ENCODE measurements at regions of chr19 and their contacts with region 1.

Region 1: GRCh38 chr19:10695401-10696398 is 5.5 kb upstream of the QTRT1 start:
- DNase-seq: peak; percentile 78 to 92
- ATAC-seq: peak; percentile 92
- H3K4me3 ChIP-seq: peak overlapping the region; percentile 18; the same call in 1 of the 3 replicates
- H3K27ac ChIP-seq: no peak overlapping the region
- H3K4me1 ChIP-seq: peaks cover 9% of the 10 kb centered on the region; the same call in 1 of the 3 replicates
- CTCF ChIP-seq: no peak
- EP300 ChIP-seq: no peak
- POLR2A ChIP-seq: no peak
- RAD21 ChIP-seq: no peak

Region 2: DNA sequence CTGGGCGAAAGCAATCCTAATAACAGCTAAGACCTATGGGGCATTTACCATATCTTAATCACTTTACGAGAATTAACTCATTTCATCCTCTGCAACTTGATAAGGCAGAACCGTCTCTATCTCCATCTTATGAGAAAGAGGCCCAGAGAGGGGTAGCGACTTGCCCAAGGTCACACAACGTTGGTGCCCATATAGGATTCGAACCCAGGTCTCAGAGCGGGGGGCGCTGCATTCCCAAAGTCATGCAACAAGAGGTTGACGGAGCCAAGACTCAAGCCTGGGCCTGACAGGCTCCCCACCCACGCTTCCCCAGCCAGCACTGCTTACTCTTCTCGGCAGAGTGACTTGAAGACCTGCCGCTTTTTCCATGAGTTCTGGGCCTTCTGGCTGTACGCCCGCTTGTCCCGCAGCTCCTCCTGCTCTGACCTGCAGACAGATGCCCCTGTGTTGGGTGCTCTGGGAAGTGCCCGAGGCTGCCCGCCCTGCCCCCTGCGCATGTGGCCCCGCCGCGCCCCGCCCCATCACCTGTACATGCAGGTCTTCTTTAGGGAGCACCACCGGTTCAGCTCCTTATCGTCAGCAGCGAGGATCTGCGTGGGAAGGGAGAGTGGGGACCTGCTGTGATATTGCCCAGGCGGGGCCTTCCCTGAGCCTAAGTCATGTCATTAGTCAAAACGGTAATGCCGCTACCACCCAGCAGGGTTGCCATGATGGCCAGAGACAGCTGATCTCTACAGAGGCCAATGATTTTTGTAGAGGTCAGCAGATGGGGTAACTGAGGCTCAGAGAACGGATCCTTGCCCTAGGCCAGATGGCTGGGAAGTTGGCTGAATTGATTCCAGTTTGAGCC is 140.7 kb before region 1 on chr19:
- CTCF ChIA-PET with region 1: no interaction called
- POLR2A ChIA-PET with region 1: no interaction called
- DNase-seq: no peak
- ATAC-seq: 0 out of 6 replicates have a peak, but pooled peaks of 1 of the 2 experiments have one; percentile 35
- H3K4me3 ChIP-seq: no peak overlapping the region
- H3K27ac ChIP-seq: no peak overlapping the region
- H3K4me1 ChIP-seq: no peaks in the 10 kb centered on the region
- CTCF ChIP-seq: no peak
- EP300 ChIP-seq: no peak
- POLR2A ChIP-seq: no peak
- RAD21 ChIP-seq: no peak

Region 3: GRCh38 chr19:10615429-10616023 is 80.2 kb before region 1 on chr19:
- CTCF ChIA-PET with region 1: no interaction called
- POLR2A ChIA-PET with region 1: no interaction called
- DNase-seq: no peak
- ATAC-seq: no peak
- H3K4me3 ChIP-seq: no peak overlapping the region
- H3K27ac ChIP-seq: no peak overlapping the region
- H3K4me1 ChIP-seq: no peaks in the 10 kb centered on the region
- CTCF ChIP-seq: no peak
- EP300 ChIP-seq: no peak
- POLR2A ChIP-seq: no peak
- RAD21 ChIP-seq: no peak

Region 4: DNA sequence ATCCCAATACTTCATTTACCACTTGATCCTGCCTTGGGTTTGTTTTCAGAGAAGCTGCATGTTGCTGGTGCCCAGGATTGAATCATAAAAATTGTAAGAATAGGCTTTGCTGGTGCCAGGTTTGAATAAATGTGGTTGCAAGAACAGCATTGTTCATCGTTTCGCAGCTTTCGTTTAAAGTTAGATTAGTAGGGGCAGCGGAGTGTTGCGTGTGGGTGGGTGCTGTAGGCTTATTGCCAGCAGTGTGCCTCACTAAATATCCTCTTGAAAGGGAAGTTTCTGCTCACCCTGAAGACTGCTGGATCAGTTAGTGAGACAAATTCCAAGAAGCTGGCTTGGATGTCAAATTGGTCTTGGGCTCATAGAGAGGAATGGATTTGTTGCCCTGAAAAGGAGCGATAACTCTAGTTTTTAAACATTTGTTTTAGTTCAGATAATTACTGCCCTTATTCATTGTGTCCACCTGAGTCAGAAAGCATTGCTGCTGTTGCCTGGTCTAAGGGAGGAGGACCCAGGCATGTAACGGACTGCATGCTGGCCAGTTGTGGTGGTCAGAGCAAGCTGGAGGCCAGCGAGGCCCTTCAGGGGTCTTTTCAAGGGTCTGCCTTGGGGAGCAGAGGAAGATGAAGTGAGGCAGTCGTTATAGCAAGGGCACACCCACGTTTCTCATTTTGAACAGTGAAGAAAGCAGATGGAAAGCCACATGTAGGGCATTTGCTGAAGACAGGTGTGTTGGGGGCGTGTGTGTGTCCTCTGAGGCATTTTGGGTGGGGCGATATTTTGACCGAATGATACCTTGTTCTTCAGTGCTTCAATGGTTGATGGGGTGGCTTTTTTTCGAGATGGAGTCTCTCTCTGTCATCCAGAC is 33.1 kb before region 1 on chr19:
- CTCF ChIA-PET with region 1: interaction called, 13 read pairs
- POLR2A ChIA-PET with region 1: no interaction called
- DNase-seq: no peak
- ATAC-seq: no peak
- H3K4me3 ChIP-seq: no peak overlapping the region
- H3K27ac ChIP-seq: no peak overlapping the region
- H3K4me1 ChIP-seq: peaks cover 10% of the 10 kb centered on the region; the same call in 2 of the 3 replicates
- CTCF ChIP-seq: no peak
- EP300 ChIP-seq: no peak
- POLR2A ChIP-seq: no peak
- RAD21 ChIP-seq: no peak

Region 5: DNA sequence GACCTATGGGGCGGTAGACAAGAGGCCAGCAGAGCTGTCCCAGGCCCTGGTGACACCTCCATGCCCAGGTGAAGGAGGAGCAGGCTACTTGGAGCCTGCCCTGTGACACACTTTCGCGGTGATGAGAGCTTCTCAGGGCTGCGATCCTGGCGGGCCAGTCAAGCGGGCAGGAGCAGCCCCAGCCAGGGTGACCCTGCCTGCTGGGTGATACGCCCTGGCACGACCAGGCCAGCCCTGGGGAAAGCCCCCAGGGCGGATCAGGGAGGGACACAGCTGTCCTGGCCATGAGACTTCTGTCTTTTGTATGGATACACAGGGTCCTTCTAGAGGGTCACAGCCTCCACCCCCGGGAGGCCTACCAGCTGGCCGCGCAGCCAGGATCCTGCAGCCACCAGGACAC is 35.2 kb after region 1 on chr19:
- CTCF ChIA-PET with region 1: no interaction called
- POLR2A ChIA-PET with region 1: no interaction called
- DNase-seq: no peak
- ATAC-seq: no peak
- H3K4me3 ChIP-seq: no peak overlapping the region
- H3K27ac ChIP-seq: peak overlapping the region in 1 of 2 experiments; percentile 20; a peak in 1 of 6 replicates
- H3K4me1 ChIP-seq: no peaks in the 10 kb centered on the region
- CTCF ChIP-seq: no peak
- EP300 ChIP-seq: no peak
- POLR2A ChIP-seq: no peak
- RAD21 ChIP-seq: no peak